ENCODE measurements at regions of chr1 and their contacts with region 1.

Region 1: GRCh38 chr1:105793536-105794146 is 1262.8 kb upstream of the PRMT6 start:
- DNase-seq: no peak
- H3K4me3 ChIP-seq: no peak overlapping the region
- H3K27ac ChIP-seq: no peak overlapping the region
- H3K4me1 ChIP-seq: no peaks in the 10 kb centered on the region
- H3K27me3 ChIP-seq: no peaks in the 10 kb centered on the region
- CTCF ChIP-seq: peak; percentile 19 to 57 (median 50)
- POLR2A ChIP-seq: no peak

Region 2: GRCh38 chr1:104780470-104781078 is 1013.1 kb before region 1 on chr1:
- intact Hi-C with region 1: loop called (anchors 2 kb)
- DNase-seq: no peak
- H3K4me3 ChIP-seq: no peak overlapping the region
- H3K27ac ChIP-seq: no peak overlapping the region
- H3K4me1 ChIP-seq: no peaks in the 10 kb centered on the region
- H3K27me3 ChIP-seq: no peaks in the 10 kb centered on the region
- CTCF ChIP-seq: peak; percentile 49 to 76 (median 60)
- POLR2A ChIP-seq: no peak

Region 3: GRCh38 chr1:105467549-105467948 is 326.1 kb before region 1 on chr1:
- intact Hi-C with region 1: no loop called
- DNase-seq: no peak
- H3K4me3 ChIP-seq: no peak overlapping the region
- H3K27ac ChIP-seq: no peak overlapping the region
- H3K4me1 ChIP-seq: no peaks in the 10 kb centered on the region
- H3K27me3 ChIP-seq: no peaks in the 10 kb centered on the region
- CTCF ChIP-seq: no peak
- POLR2A ChIP-seq: no peak

Region 4: DNA sequence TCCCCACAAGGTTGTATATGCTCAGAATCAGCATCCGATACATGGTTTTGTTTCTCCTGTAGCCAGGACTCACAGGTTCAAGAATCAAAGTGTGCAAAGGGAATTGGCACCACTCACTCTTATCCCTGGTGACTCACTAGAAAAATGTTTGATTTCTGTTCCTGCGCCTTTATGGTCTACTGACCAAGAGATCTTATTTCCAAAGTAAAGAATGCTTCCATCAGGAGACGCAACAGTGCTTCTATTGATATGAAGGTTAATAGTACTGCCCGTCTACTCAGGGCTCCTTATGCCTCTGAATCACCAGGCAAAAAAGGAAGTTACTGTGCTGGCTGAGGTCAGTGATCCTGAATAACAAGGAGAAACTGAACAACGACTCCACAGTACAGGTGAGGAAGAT is 129.1 kb before region 1 on chr1:
- intact Hi-C with region 1: no loop called
- DNase-seq: no peak
- H3K4me3 ChIP-seq: no peak overlapping the region
- H3K27ac ChIP-seq: no peak overlapping the region
- H3K4me1 ChIP-seq: no peaks in the 10 kb centered on the region
- H3K27me3 ChIP-seq: no peaks in the 10 kb centered on the region
- CTCF ChIP-seq: no peak
- POLR2A ChIP-seq: no peak

Measured in prostate gland (tissue), 2 donors.